CD8-positive, alpha-beta memory T cell (primary cell): ENCODE measurements at regions of chr22 and their contacts with region 1.

Region 1: GRCh38 chr22:41940832-41941765 is 5.9 kb downstream of the CENPM start:
- DNase-seq: peak; percentile 71 to 91 (median 85)
- H3K4me3 ChIP-seq: peak overlapping the region; percentile 39
- H3K4me3 Mint-ChIP-seq: peak overlapping the region; percentile 65 to 98 (median 92)
- H3K27ac ChIP-seq: peak overlapping the region; percentile 95
- H3K27ac Mint-ChIP-seq: peak overlapping the region; percentile 94 to 100 (median 100)
- H3K4me1 ChIP-seq: peaks cover 37% of the 10 kb centered on the region
- H3K4me1 Mint-ChIP-seq: peaks cover 36 to 56% (median 40%) of the 10 kb centered on the region in 3 donors
- H3K27me3 ChIP-seq: no peaks in the 10 kb centered on the region
- H3K27me3 Mint-ChIP-seq: peaks cover 0 to 4% of the 10 kb centered on the region in 2 donors

Region 2: DNA sequence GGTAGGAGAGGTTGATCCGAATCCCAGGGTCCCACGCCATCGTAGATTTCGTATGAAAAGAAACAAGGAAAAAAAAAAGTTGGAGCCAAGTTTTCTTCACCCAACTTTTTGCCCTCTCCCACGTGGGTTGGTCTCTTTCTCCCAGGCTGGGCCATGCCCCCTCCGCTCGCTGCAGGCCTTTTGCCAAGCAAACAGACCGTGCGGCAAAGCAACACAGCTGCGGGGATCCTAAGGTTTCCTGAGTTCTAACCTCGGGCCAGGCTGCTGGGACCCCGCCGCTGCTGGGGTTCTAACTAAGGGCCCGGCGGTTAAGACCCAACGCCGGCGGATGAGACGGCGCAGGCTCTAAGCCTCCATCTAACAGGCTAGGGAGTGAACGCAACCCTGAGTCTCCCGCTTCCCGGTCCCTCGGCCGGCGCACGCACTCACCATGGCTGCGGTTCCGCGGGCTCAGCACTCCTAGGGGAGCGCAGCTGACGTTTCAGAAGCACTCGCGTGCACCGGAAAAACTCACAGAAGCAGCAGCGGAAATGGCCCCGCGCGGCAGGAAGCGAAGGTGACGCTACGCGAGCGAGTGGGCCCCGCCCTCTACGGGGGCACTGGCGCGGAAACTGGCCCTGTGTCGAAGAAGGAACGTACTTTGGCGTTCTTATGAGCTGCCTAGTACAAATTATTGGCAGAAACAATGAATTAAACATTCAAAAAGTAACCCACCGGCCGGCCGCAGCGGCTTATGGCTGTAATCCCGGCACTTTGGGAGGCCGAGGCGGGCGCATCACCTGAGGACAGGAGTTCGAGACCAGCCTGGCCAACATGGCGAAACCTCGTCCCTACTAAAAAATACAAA is 252.5 kb before region 1 on chr22 and contains the start of gene SNU13:
- CTCF ChIA-PET with region 1: interaction called, 9 read pairs
- POLR2A ChIA-PET with region 1: interaction called, 19 read pairs
- DNase-seq: peak; percentile 90 to 94 (median 91)
- H3K4me3 ChIP-seq: peak within 1 kb of the TSS; percentile 89
- H3K4me3 Mint-ChIP-seq: peak within 1 kb of the TSS; percentile 92 to 98 (median 95)
- H3K27ac ChIP-seq: peak within 1 kb of the TSS; percentile 98
- H3K27ac Mint-ChIP-seq: peak within 1 kb of the TSS; percentile 92 to 99 (median 98)
- H3K4me1 ChIP-seq: peaks cover 13% of the 10 kb centered on the region
- H3K4me1 Mint-ChIP-seq: peaks cover 25 to 47% (median 37%) of the 10 kb centered on the region in 3 donors
- H3K27me3 ChIP-seq: no peaks in the 10 kb centered on the region
- H3K27me3 Mint-ChIP-seq: no peaks in the 10 kb centered on the region
- total RNA-seq, gene SNU13: 315 to 324 TPM

Region 3: DNA sequence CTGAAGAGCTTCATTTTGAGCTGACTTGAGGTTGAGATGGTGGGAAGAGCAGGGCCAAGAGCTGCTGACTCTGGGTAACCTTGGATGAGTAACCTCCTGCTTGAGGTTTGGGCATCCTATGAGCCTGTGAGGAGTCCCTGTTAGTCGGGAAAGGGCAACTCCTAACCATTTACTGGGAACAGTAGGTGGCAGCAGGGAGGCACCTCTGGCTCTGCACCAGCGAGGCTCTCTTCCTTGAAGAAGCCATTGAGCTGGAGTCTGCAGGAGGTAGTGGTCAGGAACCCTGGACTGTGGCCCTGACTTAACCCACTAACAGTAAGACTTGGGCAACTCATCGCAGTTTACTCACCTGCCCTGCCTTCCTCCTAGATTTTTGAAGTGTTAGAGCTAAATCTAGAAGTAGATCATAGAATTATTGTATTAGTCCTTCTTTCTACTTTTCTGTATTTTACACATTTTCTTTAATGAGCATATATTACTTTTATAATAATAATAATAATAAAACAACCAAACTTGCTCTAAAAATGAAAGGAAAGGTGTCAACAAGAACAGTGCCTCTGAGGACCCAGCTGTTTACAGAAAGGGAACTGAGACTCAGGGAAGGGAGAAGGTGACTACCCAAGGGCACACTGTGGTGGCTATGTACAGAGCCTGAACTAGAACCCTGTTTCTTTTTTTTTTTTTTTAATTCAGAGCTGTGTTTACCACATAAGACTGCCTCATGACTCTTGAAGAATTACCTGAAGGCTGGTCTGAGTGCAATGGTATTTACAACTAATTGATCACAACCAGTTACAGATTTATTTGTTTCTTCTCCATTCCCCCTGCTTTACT is 194.3 kb before region 1 on chr22:
- CTCF ChIA-PET with region 1: interaction called, 32 read pairs
- POLR2A ChIA-PET with region 1: interaction called, 12 read pairs
- DNase-seq: peak; percentile 26 to 70 (median 40)
- H3K4me3 ChIP-seq: no peak overlapping the region
- H3K4me3 Mint-ChIP-seq: no peak overlapping the region
- H3K27ac ChIP-seq: no peak overlapping the region
- H3K27ac Mint-ChIP-seq: peak overlapping the region in 3 of 8 donors; percentile 26 to 38 (median 38)
- H3K4me1 ChIP-seq: no peaks in the 10 kb centered on the region
- H3K4me1 Mint-ChIP-seq: peaks cover 0 to 4% (median 3%) of the 10 kb centered on the region in 3 donors
- H3K27me3 ChIP-seq: no peaks in the 10 kb centered on the region
- H3K27me3 Mint-ChIP-seq: peaks cover 3 to 28% of the 10 kb centered on the region in 2 donors

Region 4: DNA sequence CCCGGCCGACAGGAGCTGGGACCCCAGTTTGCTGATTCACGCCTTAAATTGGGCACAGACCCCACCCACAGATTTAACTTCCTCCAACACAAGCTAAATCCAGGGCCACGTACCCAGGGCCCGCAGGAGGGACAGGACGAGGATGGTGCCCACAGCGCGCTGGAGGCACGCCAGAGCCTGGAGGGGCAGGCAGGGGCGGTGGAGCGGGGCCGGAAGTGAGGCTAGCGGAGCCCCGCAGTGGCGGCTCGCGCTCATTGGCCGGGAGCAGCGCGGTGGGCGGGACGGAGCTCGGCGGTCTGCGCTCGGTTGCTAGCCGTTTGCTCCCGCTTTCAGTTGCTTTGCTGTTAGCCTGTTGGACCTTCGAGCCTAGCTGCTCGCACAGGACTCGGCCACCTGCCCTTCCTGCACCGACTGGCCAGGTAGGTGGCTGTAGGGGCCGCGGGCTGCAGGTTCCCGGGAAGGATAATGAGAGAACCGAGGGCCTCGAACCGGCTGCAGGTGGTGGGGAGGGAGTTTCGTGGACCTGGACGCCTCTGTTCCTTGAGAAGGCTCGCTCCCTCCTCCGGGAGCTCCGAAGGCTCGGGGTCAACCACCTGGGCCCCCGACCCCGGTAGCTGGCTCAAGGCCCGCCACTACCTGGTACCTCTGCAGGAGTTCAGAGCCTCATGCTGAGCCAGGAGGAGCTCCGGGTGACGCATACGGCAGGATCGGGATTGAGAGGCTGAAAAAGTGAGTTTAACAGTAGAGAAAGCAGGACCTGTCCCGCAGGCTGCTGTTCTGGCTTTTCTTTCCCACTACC is 140.6 kb before region 1 on chr22 and contains the start of gene CCDC134:
- CTCF ChIA-PET with region 1: interaction called, 17 read pairs
- POLR2A ChIA-PET with region 1: interaction called, 33 read pairs
- DNase-seq: peak; percentile 88 to 94 (median 91)
- H3K4me3 ChIP-seq: peak within 1 kb of the TSS; percentile 96
- H3K4me3 Mint-ChIP-seq: peak within 1 kb of the TSS; percentile 87 to 99 (median 94)
- H3K27ac ChIP-seq: peak within 1 kb of the TSS; percentile 96
- H3K27ac Mint-ChIP-seq: peak within 1 kb of the TSS; percentile 89 to 100 (median 98)
- H3K4me1 ChIP-seq: peaks cover 33% of the 10 kb centered on the region
- H3K4me1 Mint-ChIP-seq: peaks cover 28 to 58% (median 44%) of the 10 kb centered on the region in 3 donors
- H3K27me3 ChIP-seq: no peaks in the 10 kb centered on the region
- H3K27me3 Mint-ChIP-seq: no peaks in the 10 kb centered on the region
- total RNA-seq, gene CCDC134: 17.9 to 19.9 TPM

Region 5: DNA sequence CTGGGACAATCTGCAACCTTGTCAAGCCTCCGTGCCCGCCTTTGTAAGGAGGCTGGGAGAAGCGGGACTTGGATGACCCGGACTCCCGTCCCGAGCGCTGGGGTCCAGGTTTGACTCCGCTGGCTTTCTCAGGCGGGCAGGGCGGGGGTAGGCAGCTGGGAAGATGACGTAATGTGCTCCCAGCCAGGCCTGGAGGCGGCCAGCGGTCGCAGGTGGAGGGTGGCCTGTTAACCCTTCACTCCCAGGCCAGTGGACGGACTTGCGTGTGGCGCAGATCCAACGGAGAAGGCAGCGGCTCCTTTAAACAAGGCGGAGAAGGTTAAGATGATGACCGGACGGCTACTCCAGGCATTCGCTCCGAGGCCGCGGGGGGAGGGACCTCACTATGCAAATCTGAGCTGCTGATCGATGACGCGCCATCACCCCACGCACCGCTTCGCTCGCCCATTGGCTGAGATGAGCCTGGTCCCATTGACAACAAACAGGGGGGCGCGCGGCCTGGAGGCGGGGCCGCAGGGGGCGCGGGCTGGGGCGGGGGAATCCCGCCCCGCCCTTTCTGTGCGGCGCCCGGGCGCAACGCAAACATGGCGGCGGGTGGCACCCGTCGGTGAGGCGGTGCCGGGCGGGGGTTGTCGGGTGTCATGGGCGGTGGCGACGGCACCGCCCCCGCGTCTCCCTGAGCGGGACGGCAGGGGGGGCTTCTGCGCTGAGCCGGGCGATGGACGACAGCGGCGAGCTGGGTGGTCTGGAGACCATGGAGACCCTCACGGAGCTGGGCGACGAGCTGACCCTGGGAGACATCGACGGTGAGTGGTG is 108.3 kb before region 1 on chr22 and contains the start of gene SREBF2:
- CTCF ChIA-PET with region 1: interaction called, 35 read pairs
- POLR2A ChIA-PET with region 1: interaction called, 50 read pairs
- DNase-seq: peak; percentile 97 to 99 (median 98)
- H3K4me3 ChIP-seq: peak within 1 kb of the TSS; percentile 99
- H3K4me3 Mint-ChIP-seq: peak within 1 kb of the TSS; percentile 95 to 99 (median 97)
- H3K27ac ChIP-seq: peak within 1 kb of the TSS; percentile 97
- H3K27ac Mint-ChIP-seq: peak within 1 kb of the TSS; percentile 98 to 100 (median 99)
- H3K4me1 ChIP-seq: peaks cover 24% of the 10 kb centered on the region
- H3K4me1 Mint-ChIP-seq: peaks cover 21 to 46% (median 35%) of the 10 kb centered on the region in 3 donors
- H3K27me3 ChIP-seq: no peaks in the 10 kb centered on the region
- H3K27me3 Mint-ChIP-seq: no peaks in the 10 kb centered on the region
- total RNA-seq, gene SREBF2: 85.1 to 87.1 TPM

Region 6: DNA sequence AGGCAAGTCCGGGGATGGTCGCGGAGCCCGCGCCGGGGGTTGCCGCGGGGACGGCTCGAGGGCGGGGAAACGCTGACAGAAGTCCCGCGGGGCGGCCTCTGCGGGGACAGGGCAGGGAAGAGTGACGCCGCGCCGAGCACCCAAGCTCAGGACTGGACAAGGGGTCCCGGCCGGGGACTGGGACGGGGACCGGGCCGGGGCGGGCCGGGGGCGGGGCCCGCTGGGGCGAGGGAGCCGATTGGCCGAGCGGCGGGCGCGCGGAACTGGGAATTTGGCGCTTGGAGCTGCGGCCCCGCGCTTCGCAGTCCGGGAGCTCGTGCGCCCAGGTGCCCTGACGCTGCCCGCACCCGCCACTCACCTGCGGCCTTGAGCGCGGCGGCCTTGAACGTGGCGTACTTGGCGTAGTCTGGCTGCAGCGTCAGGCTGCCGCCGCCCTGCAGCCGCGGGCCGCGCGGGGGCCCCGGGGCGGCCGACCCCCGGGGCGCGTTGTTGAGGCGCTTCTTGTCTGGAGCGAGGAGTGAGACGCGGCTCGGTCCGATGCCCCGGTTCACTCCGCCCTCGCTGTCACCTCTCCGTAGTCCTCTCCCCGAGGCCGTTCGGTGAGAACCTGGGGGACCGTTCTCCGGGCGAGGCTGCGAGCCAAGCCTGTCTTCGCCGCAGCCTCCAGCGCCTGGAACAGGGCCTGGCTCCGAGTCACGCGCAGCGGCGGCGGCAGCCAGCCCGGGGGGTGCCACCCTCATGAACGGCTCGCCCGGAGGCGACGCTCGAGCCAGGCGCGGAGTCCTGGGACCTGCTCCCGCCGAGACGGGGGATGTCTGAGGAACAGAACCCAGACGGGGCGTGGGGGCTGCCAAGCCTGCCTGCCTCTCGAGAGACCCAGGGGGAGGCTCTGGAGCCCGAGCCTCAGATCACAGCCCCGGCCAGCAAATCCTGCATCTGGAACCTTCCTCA is 30.8 kb before region 1 on chr22:
- CTCF ChIA-PET with region 1: interaction called, 9 read pairs
- POLR2A ChIA-PET with region 1: interaction called, 11 read pairs
- DNase-seq: peak in 4 of 5 donors; percentile 14 to 62 (median 36)
- H3K4me3 ChIP-seq: no peak overlapping the region
- H3K4me3 Mint-ChIP-seq: peak overlapping the region in 6 of 7 donors; percentile 40 to 71 (median 50)
- H3K27ac ChIP-seq: no peak overlapping the region
- H3K27ac Mint-ChIP-seq: peak overlapping the region in 2 of 8 donors; percentile 38 to 65
- H3K4me1 ChIP-seq: peaks cover 30% of the 10 kb centered on the region
- H3K4me1 Mint-ChIP-seq: peaks cover 23 to 39% (median 27%) of the 10 kb centered on the region in 3 donors
- H3K27me3 ChIP-seq: peaks cover 36% of the 10 kb centered on the region
- H3K27me3 Mint-ChIP-seq: peaks cover 15 to 24% of the 10 kb centered on the region in 2 donors

Region 7: GRCh38 chr22:41925655-41926460 is 15.2 kb before region 1 on chr22:
- CTCF ChIA-PET with region 1: interaction called, 106 read pairs
- POLR2A ChIA-PET with region 1: interaction called, 100 read pairs
- DNase-seq: peak; percentile 75 to 86 (median 78)
- H3K4me3 ChIP-seq: peak overlapping the region; percentile 34
- H3K4me3 Mint-ChIP-seq: peak overlapping the region; percentile 82 to 91 (median 85)
- H3K27ac ChIP-seq: no peak overlapping the region
- H3K27ac Mint-ChIP-seq: peak overlapping the region in 6 of 8 donors; percentile 65 to 87 (median 78)
- H3K4me1 ChIP-seq: peaks cover 10% of the 10 kb centered on the region
- H3K4me1 Mint-ChIP-seq: peaks cover 4 to 34% (median 9%) of the 10 kb centered on the region in 3 donors
- H3K27me3 ChIP-seq: no peaks in the 10 kb centered on the region
- H3K27me3 Mint-ChIP-seq: peaks cover 3 to 6% of the 10 kb centered on the region in 2 donors